ENCODE measurements at regions of chrX and their contacts with region 1.

Region 1: DNA sequence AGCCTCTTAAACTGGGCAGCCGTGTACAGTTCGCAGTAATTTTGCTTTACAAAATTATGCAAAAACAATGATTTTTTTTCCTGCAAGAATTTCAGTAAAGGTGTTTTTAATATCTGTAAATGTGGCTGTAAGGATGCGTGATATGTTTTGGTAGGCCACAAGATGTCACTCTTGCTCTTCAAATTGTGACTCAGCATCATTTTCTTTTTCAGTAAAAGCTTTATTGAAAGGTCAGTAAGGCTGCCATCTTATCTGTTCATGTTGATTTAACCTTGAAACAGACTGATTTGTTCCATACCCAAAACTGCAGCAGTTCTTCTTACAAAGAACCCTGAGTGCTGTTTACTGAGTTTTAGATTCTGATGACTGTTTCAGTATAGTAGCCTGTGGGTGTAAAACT is 39.9 kb downstream of the TXLNG start:
- DNase-seq: peak; percentile 41 to 72
- ATAC-seq: peak; percentile 78 to 79; a peak in 5 of 6 replicates
- H3K4me3 ChIP-seq: no peak overlapping the region
- H3K27ac ChIP-seq: peak overlapping the region; percentile 56 to 80
- H3K4me1 ChIP-seq: peaks cover 39% of the 10 kb centered on the region
- CTCF ChIP-seq: peak; percentile 63
- EP300 ChIP-seq: no peak
- POLR2A ChIP-seq: no peak
- RAD21 ChIP-seq: peak; percentile 63 to 71

Region 2: DNA sequence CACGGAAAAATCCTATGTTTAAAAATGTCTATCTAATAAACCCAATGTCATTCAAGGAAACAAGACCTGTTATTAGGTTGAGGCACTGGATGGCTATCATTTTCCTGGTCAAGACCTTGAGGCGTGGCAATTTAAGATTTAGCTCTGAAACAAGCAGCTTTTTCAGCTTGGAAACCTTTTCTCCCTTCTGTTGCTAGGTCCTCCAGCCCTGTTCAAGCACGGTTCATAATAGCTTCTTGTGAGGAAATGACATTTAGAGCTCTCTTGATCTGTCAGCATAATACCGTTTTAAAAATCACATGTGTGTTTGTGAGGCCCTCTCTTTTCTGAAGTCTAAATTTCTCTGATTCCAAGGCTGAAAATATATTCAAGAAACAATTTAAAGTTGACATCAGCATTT is 836.5 kb before region 1 on chrX:
- CTCF ChIA-PET with region 1: no interaction called
- POLR2A ChIA-PET with region 1: no interaction called
- DNase-seq: no peak
- ATAC-seq: no peak
- H3K4me3 ChIP-seq: no peak overlapping the region
- H3K27ac ChIP-seq: no peak overlapping the region
- H3K4me1 ChIP-seq: no peaks in the 10 kb centered on the region
- CTCF ChIP-seq: no peak
- EP300 ChIP-seq: no peak
- POLR2A ChIP-seq: no peak
- RAD21 ChIP-seq: no peak

Region 3: GRCh38 chrX:16743604-16744325 is 82.4 kb before region 1 on chrX:
- CTCF ChIA-PET with region 1: no interaction called
- POLR2A ChIA-PET with region 1: no interaction called
- DNase-seq: peak in 1 of 2 experiments; percentile 61
- ATAC-seq: peak; percentile 80 to 82
- H3K4me3 ChIP-seq: no peak overlapping the region
- H3K27ac ChIP-seq: peak overlapping the region in 1 of 2 experiments; percentile 54; a peak in 1 of 6 replicates
- H3K4me1 ChIP-seq: no peaks in the 10 kb centered on the region
- CTCF ChIP-seq: 0 out of 3 replicates have a peak, but pooled peaks have one; percentile 8
- EP300 ChIP-seq: no peak
- POLR2A ChIP-seq: no peak
- RAD21 ChIP-seq: peak in 1 of 2 experiments; percentile 36; a peak in 2 of 5 replicates

Region 4: GRCh38 chrX:16836371-16836770 is 10.2 kb after region 1 on chrX:
- CTCF ChIA-PET with region 1: interaction called, 10 read pairs
- POLR2A ChIA-PET with region 1: no interaction called
- DNase-seq: peak; percentile 57 to 62
- ATAC-seq: peak; percentile 94 to 95
- H3K4me3 ChIP-seq: no peak overlapping the region
- H3K27ac ChIP-seq: peak overlapping the region in 1 of 2 experiments; percentile 46; a peak in 1 of 6 replicates
- H3K4me1 ChIP-seq: peaks cover 30% of the 10 kb centered on the region
- CTCF ChIP-seq: 0 out of 3 replicates have a peak, but pooled peaks have one; percentile 19
- EP300 ChIP-seq: no peak
- POLR2A ChIP-seq: no peak
- RAD21 ChIP-seq: peak in 1 of 2 experiments; percentile 22; a peak in 1 of 5 replicates

Region 5: GRCh38 chrX:16882702-16883486 is 56.7 kb after region 1 on chrX:
- CTCF ChIA-PET with region 1: interaction called, 33 read pairs
- POLR2A ChIA-PET with region 1: interaction called, 6 read pairs
- DNase-seq: peak; percentile 74
- ATAC-seq: peak; percentile 95 to 98
- H3K4me3 ChIP-seq: peak overlapping the region; percentile 50
- H3K27ac ChIP-seq: peak overlapping the region; percentile 73 to 86
- H3K4me1 ChIP-seq: no peaks in the 10 kb centered on the region
- CTCF ChIP-seq: peak; percentile 72
- EP300 ChIP-seq: no peak
- POLR2A ChIP-seq: peak; percentile 18; the same call in 1 of the 2 replicates
- RAD21 ChIP-seq: peak; percentile 53 to 57; a peak in 4 of 5 replicates

Region 6: DNA sequence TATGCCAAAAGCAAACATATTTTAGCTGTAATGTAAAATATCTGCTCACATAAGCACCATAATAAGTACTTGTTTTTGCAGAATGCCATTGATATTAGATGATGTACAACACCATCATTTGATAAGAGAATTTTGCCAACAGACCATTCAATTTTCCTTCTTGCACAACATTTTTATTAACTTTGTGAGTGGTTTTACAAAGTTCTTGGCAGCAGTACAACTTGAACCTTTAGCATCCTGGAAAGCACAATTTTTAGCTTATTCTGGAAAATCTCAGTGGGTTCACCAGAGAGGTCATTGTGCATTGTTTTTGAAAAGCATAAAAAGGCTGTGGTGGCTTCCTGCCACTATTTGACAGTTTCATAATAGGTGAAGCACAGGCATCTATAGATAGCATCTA is 93.9 kb after region 1 on chrX:
- CTCF ChIA-PET with region 1: no interaction called
- POLR2A ChIA-PET with region 1: no interaction called
- DNase-seq: no peak
- ATAC-seq: no peak
- H3K4me3 ChIP-seq: no peak overlapping the region
- H3K27ac ChIP-seq: no peak overlapping the region
- H3K4me1 ChIP-seq: no peaks in the 10 kb centered on the region
- CTCF ChIP-seq: no peak
- EP300 ChIP-seq: no peak
- POLR2A ChIP-seq: no peak
- RAD21 ChIP-seq: no peak

Region 7: DNA sequence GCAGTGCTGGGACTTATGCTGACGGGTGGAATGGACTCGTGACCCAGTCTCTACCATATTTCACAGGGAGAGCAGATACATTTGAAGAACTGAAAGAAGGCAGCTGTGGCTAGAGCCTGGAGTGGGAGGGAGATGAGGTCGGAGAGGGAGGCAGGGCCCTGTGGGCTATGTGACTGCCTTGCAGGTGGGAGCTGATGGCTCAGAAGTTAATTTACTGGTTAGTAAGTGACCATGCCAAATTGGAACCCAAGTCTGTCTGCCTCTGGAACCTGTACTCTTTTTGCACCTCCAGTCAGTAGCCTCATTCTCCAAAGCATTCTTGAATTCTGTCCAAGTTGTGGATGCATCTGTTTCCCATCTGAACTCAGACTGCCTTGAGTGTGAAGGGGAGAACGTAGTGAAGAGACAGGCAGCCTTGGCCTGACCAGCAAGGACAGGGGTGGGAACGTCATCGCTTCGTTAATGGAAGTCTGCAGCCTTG is 212.5 kb after region 1 on chrX:
- CTCF ChIA-PET with region 1: interaction called, 70 read pairs
- POLR2A ChIA-PET with region 1: no interaction called
- DNase-seq: no peak
- ATAC-seq: no peak
- H3K4me3 ChIP-seq: no peak overlapping the region
- H3K27ac ChIP-seq: no peak overlapping the region
- H3K4me1 ChIP-seq: no peaks in the 10 kb centered on the region
- CTCF ChIP-seq: no peak
- EP300 ChIP-seq: no peak
- POLR2A ChIP-seq: no peak
- RAD21 ChIP-seq: no peak

Region 8: GRCh38 chrX:17082831-17083230 is 256.6 kb after region 1 on chrX:
- CTCF ChIA-PET with region 1: interaction called, 27 read pairs
- POLR2A ChIA-PET with region 1: no interaction called
- DNase-seq: peak; percentile 42 to 44
- ATAC-seq: peak; percentile 78 to 85; a peak in 4 of 6 replicates
- H3K4me3 ChIP-seq: no peak overlapping the region
- H3K27ac ChIP-seq: no peak overlapping the region
- H3K4me1 ChIP-seq: no peaks in the 10 kb centered on the region
- CTCF ChIP-seq: peak; percentile 36
- EP300 ChIP-seq: no peak
- POLR2A ChIP-seq: no peak
- RAD21 ChIP-seq: peak; percentile 31 to 43; a peak in 2 of 5 replicates

Measured in A549 (cell line).